ENCODE measurements at regions of chr2 and their contacts with region 1.

Region 1: GRCh38 chr2:69572641-69573040 is 70.9 kb downstream of the AAK1 start:
- DNase-seq: no peak
- H3K4me3 ChIP-seq: no peak overlapping the region
- H3K27ac ChIP-seq: no peak overlapping the region
- H3K4me1 ChIP-seq: peaks cover 0 to 7% (median 2%) of the 10 kb centered on the region in 4 experiments; a peak in 2 of 7 replicates
- H3K27me3 ChIP-seq: no peaks in the 10 kb centered on the region
- CTCF ChIP-seq: no peak
- EP300 ChIP-seq: no peak
- POLR2A ChIP-seq: no peak
- RAD21 ChIP-seq: no peak

Region 2: DNA sequence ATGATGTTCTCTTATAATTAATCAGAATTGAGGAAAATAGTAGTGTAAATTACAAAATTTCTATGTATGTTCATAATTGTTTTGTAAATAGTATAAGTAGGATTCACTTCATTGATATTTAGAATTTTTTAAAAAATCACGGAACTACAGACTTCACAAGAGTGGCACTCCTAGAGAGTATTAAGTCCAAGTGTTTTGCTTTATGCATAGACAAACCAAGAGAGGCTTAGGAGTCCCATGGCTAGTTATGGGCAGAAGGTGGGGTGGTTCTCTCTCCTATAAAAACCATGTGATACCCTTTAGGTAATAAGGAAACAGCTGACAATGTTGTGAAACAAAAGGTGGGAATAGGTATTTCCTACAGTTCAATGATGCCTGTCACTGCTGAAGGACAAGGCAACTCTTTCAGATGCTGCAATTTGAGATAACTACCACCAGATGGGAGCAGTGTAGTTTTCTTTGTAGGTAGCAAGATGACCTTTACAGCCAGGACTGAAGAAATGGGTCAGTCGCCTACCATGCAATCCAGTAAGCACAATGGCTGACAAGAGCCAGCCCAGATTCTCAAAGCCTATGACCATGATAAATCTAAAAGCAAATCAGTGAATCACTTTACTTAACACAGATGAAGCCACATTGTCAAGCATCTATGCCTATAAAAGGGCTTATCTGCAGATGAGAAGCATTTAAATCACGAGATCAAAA is 13.0 kb before region 1 on chr2:
- CTCF ChIA-PET with region 1: interaction called, 39 read pairs
- POLR2A ChIA-PET with region 1: no interaction called
- DNase-seq: peak in 1 of 2 experiments; percentile 15
- H3K4me3 ChIP-seq: no peak overlapping the region
- H3K27ac ChIP-seq: no peak overlapping the region
- H3K4me1 ChIP-seq: peaks cover 0 to 5% (median 2%) of the 10 kb centered on the region in 4 experiments; a peak in 3 of 7 replicates
- H3K27me3 ChIP-seq: no peaks in the 10 kb centered on the region
- CTCF ChIP-seq: peak in 2 of 3 experiments; percentile 75 to 89; a peak in 3 of 4 replicates
- EP300 ChIP-seq: no peak
- POLR2A ChIP-seq: no peak
- RAD21 ChIP-seq: peak; percentile 91 to 95

Region 3: DNA sequence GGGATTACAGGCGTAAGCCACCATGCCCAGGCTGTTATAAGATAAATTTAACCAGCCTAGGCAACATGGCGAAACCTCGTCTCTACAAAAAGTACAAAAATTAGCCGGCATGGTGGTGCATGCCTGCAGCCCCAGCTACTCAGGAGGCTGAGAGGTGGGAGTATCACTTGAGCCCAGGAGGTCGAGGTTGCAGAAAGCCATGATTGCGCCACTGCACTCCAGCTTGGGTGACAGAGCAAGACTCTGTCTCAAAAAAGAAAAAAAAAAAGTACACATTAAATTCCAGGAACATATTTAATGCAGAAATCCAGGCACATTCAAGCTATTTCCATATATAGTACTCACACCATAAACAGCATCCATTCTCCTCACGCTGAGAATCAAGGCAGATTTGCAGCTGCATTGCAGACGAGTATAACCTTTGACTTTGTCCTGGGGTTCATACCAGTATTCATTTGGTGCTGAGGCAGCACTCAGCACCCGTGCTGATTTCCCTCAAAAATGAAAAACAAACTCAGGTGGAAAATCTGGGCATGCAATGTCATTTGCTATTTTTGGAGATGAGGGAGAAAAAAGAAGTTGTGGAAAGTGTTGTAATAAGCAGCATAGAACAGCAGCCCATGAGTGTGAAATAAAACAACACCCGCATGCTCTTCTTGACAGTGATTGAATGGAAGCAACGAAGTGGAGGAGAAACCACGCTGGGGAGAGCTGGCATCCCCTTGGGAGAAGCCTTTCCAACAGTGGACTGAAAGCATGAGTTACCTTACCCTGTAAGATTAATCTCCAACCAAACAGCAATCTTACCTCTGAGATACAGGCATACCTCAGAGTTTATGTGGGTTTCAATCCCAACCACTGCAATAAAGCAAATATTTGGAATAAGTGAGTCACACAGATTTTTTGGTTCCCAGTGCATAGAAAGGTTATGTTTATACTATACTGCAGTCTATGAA is 122.5 kb after region 1 on chr2:
- CTCF ChIA-PET with region 1: no interaction called
- POLR2A ChIA-PET with region 1: no interaction called
- DNase-seq: no peak
- H3K4me3 ChIP-seq: no peak overlapping the region
- H3K27ac ChIP-seq: no peak overlapping the region
- H3K4me1 ChIP-seq: peaks cover 0 to 3% (median 0%) of the 10 kb centered on the region in 4 experiments; a peak in 1 of 7 replicates
- H3K27me3 ChIP-seq: no peaks in the 10 kb centered on the region
- CTCF ChIP-seq: no peak
- EP300 ChIP-seq: no peak
- POLR2A ChIP-seq: no peak
- RAD21 ChIP-seq: no peak